ENCODE measurements at regions of chr3 and their contacts with region 1.

Region 1: DNA sequence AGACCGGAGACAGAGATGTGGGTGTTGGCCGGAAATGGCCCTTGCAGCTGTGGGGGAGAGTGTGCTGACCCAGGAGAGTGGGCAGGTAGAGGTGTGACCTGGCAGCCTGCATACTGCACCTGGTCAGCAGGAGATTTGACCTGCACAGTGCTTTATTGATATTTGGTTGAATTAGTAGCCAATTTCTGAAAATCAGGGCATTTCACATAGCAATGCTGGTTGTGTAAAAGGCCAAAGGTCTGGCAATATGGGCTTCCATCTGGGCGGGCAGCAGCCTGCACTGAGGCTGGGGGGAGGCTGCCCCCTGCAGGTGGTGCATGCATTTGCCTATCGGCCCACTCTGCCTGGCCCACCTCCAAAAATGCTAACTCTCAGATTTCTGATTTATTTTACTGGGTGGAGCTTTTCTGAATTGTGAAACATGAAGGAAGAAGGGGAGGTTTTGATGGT is 9.4 kb upstream of the MGLL start:
- H3K4me3 Mint-ChIP-seq: no peak overlapping the region
- H3K27ac Mint-ChIP-seq: no peak overlapping the region
- H3K4me1 Mint-ChIP-seq: peaks cover 21% of the 10 kb centered on the region
- H3K27me3 Mint-ChIP-seq: no peaks in the 10 kb centered on the region

Region 2: DNA sequence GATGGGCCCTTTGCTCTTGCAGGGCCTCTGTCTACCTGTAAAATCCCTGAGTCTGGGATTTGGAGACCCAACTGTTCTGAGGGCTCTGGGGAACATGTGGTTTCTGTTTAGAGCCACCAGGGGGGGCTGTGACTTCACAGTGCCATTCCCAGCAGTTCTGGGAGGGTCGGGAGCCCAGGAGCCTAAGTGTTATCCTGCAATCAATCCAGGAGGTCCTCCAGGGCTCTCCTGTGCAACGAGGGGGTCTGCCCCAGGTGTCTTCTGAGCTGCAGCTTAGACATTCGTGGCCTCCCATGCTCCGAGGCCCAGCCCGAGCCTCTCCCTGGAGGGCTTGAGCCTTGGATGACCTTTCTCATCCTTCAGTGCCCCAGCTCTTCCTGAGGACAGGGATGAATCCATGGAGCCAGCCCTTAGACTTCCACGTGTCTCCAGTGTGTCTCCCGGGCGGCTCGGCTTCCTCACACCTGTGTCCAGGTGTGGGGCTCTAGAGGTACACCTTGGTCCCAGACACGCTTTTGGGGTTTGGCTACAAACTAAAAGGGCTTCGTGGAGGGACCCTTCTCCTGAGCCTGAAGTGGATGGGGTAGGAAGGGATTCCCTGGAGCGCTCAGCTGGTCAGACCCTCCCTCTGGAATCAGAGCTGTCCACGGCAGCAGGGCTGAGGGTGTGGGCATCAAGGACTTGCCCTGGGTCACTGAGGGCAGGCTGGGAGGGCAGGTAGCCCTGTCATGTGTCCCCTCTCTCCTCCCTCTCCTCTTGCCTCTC is 179.3 kb before region 1 on chr3:
- intact Hi-C with region 1: loop called (anchors 2 kb)
- H3K4me3 Mint-ChIP-seq: no peak overlapping the region
- H3K27ac Mint-ChIP-seq: no peak overlapping the region
- H3K4me1 Mint-ChIP-seq: peaks cover 7% of the 10 kb centered on the region
- H3K27me3 Mint-ChIP-seq: peaks cover 4% of the 10 kb centered on the region

Region 3: GRCh38 chr3:127667119-127667681 is 164.5 kb before region 1 on chr3:
- intact Hi-C with region 1: no loop called
- H3K4me3 Mint-ChIP-seq: no peak overlapping the region
- H3K27ac Mint-ChIP-seq: no peak overlapping the region
- H3K4me1 Mint-ChIP-seq: peaks cover 14% of the 10 kb centered on the region
- H3K27me3 Mint-ChIP-seq: no peaks in the 10 kb centered on the region

Region 4: DNA sequence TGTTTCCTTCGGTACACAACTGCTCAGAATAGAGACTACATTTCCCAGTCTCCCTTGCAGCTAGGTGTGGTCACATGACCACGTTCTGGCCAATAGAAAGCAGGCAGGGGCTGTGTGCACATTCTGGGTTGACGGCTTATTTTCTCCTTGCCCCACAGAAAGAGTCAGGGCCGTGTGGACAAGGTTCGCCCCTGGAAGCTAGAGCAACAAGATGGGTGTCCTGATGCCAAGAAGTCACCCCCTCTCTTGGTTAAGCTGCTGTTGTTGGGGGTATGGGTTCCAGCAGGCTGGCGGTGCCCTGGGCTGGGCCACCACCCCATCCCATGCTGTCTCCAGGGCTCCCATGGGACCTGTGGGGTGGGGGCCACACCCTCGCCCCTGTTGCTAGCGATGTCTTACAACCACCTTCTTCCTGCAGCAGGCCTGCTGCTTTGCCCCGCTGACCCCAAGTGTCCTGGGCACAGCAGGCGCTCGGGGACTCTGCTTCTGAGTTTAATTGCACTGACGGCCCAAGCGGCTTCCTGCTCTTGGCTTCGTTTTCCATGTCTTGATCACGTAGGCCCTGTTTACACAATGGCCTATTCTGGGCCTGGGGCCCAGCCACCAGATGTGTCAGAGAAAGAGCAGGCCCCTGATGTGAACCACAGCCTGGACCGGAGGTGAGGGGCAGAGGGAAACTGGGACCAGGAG is 134.1 kb before region 1 on chr3:
- intact Hi-C with region 1: loop called (anchors 2 kb)
- H3K4me3 Mint-ChIP-seq: no peak overlapping the region
- H3K27ac Mint-ChIP-seq: peak overlapping the region; percentile 78
- H3K4me1 Mint-ChIP-seq: peaks cover 25% of the 10 kb centered on the region
- H3K27me3 Mint-ChIP-seq: peaks cover 3% of the 10 kb centered on the region

Region 5: DNA sequence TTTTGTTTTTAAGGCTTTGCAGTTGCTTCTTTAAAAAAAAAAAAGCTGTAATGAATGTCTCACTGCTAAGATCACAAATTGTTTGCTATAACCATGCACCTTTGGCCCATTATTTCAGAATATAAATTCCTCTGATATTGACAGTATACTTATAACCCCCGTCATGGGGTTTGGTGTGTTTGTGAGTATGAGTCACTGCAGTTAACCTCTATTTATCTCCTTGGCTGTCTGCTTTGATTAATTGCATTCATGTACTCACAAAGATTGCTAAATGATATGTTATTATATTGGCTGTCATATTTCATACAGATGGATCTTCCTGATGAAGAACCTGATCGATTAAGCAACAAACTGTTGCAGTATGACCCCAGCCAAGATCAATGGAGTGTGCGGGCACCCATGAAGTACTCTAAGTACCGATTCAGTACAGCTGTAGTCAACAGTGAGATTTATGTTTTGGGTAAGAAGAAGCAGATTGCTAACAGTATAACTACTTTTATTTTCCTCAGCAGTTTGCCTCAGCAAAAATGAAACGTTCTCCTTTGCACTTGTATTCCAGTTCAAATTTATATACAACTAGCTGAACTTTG is 98.2 kb after region 1 on chr3:
- intact Hi-C with region 1: no loop called
- H3K4me3 Mint-ChIP-seq: no peak overlapping the region
- H3K27ac Mint-ChIP-seq: no peak overlapping the region
- H3K4me1 Mint-ChIP-seq: peaks cover 13% of the 10 kb centered on the region
- H3K27me3 Mint-ChIP-seq: peaks cover 9% of the 10 kb centered on the region

Region 6: GRCh38 chr3:127959846-127960245 is 128.1 kb after region 1 on chr3:
- intact Hi-C with region 1: loop called (anchors 10 kb)
- H3K4me3 Mint-ChIP-seq: no peak overlapping the region
- H3K27ac Mint-ChIP-seq: no peak overlapping the region
- H3K4me1 Mint-ChIP-seq: no peaks in the 10 kb centered on the region
- H3K27me3 Mint-ChIP-seq: peaks cover 4% of the 10 kb centered on the region